ENCODE measurements at regions of chr19 and their contacts with region 1.

Region 1: GRCh38 chr19:47243776-47244547 is 12.4 kb upstream of the CCDC9 start:
- DNase-seq: peak; percentile 91
- H3K4me3 ChIP-seq: peak overlapping the region; percentile 37 to 57
- H3K27ac ChIP-seq: peak overlapping the region; percentile 68 to 84
- H3K4me1 ChIP-seq: peaks cover 12 to 36% of the 10 kb centered on the region in 2 experiments; a peak in 3 of 4 replicates
- H3K27me3 ChIP-seq: no peaks in the 10 kb centered on the region
- CTCF ChIP-seq: peak; percentile 97
- EP300 ChIP-seq: peak in 1 of 2 experiments; percentile 68; a peak in 1 of 4 replicates
- RAD21 ChIP-seq: peak; percentile 94

Region 2: GRCh38 chr19:47112997-47113849 is 130.7 kb before region 1 on chr19 and contains the start of gene ZC3H4:
- CTCF ChIA-PET with region 1: interaction called, 11 read pairs
- POLR2A ChIA-PET with region 1: interaction called, 6 read pairs
- DNase-seq: peak; percentile 92
- H3K4me3 ChIP-seq: peak within 1 kb of the TSS; percentile 78 to 92
- H3K27ac ChIP-seq: peak within 1 kb of the TSS; percentile 99 to 100
- H3K4me1 ChIP-seq: peaks cover 18 to 23% of the 10 kb centered on the region in 2 experiments
- H3K27me3 ChIP-seq: no peaks in the 10 kb centered on the region
- CTCF ChIP-seq: no peak
- EP300 ChIP-seq: peak in 1 of 2 experiments; percentile 28; a peak in 1 of 4 replicates
- RAD21 ChIP-seq: no peak
- polyA plus RNA-seq, gene ZC3H4: 3.9 and 7.6 TPM in 2 replicates

Region 3: DNA sequence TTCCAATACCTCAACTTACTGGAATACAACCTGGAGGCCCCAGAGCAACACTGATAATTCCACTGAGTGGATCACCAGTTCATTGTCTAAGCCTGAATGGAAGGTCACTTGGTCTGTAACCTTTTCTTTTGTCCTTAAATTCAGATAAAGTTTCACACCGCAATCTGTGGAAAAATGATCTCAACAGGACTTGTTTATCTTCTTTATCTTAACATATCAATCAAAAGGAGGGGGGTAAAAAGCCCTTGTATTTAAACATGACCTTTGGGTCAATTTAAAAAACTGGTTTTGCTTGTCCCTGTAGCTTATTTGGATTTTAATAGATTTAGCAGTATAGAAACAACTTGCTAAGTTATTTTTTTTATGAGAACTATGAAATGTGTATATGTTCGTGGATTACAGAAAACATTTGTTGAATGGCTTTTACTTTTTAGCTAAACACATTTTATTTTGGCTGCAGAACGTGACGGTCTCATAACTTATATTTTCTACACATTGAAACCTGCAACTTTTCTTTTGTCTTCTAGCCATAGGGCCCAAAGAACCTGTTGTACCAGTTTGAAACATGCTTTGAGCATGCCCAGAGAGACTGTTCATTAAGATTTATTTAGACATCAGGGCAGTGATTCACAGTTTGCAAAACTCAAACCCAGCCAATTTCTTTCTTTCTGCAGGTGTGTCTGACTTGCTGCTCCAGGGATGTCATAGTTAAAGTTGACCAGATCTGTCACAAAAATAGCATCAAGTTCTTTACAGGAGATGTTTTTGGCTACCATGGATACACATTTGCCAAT is 91.5 kb before region 1 on chr19:
- CTCF ChIA-PET with region 1: interaction called, 132 read pairs
- POLR2A ChIA-PET with region 1: interaction called, 3 read pairs
- DNase-seq: no peak
- H3K4me3 ChIP-seq: no peak overlapping the region
- H3K27ac ChIP-seq: peak overlapping the region in 1 of 2 experiments; percentile 50; a peak in 1 of 4 replicates
- H3K4me1 ChIP-seq: peaks cover 0 to 3% of the 10 kb centered on the region in 2 experiments; a peak in 2 of 4 replicates
- H3K27me3 ChIP-seq: no peaks in the 10 kb centered on the region
- CTCF ChIP-seq: no peak
- EP300 ChIP-seq: no peak
- RAD21 ChIP-seq: no peak

Region 4: DNA sequence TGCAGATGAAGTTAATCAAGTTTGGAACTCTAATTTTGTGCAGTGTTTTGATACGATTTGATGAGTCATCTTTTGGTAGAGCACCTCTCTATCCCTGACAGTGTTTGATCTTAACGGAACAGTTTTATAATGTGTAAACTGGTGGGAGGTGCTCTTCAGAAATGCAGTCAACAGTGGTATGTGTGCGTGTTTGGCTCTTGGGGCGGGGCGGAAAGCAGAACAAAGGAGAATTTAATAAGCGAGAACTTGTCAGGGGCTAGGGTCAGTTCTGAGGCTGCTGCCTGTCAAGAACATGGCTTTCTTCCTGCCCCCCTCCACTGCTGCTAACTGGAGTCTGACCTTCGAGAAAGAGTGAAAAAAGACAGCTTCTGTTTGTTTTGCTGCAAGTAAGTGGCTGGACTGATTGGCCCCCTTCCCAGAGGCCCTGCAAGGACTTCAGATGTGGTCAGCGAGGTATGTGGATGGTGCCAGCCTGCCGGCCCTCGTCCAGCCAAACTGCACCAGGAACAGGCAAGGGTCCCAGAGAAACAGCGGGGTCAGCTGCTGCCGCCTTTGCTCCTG is 53.7 kb before region 1 on chr19:
- CTCF ChIA-PET with region 1: interaction called, 19 read pairs
- POLR2A ChIA-PET with region 1: interaction called, 5 read pairs
- DNase-seq: peak; percentile 46
- H3K4me3 ChIP-seq: peak overlapping the region in 1 of 2 experiments; percentile 16; a peak in 1 of 4 replicates
- H3K27ac ChIP-seq: peak overlapping the region; percentile 60 to 73
- H3K4me1 ChIP-seq: peaks cover 17 to 47% of the 10 kb centered on the region in 2 experiments; a peak in 3 of 4 replicates
- H3K27me3 ChIP-seq: no peaks in the 10 kb centered on the region
- CTCF ChIP-seq: no peak
- EP300 ChIP-seq: peak in 1 of 2 experiments; percentile 63; a peak in 1 of 4 replicates
- RAD21 ChIP-seq: no peak

Region 5: GRCh38 chr19:47231215-47231984 is 12.6 kb before region 1 on chr19:
- CTCF ChIA-PET with region 1: interaction called, 520 read pairs
- POLR2A ChIA-PET with region 1: interaction called, 65 read pairs
- DNase-seq: peak; percentile 94
- H3K4me3 ChIP-seq: peak overlapping the region; percentile 49 to 93
- H3K27ac ChIP-seq: peak overlapping the region; percentile 89 to 90
- H3K4me1 ChIP-seq: peaks cover 20 to 34% of the 10 kb centered on the region in 2 experiments
- H3K27me3 ChIP-seq: no peaks in the 10 kb centered on the region
- CTCF ChIP-seq: no peak
- EP300 ChIP-seq: no peak
- RAD21 ChIP-seq: no peak

Region 6: DNA sequence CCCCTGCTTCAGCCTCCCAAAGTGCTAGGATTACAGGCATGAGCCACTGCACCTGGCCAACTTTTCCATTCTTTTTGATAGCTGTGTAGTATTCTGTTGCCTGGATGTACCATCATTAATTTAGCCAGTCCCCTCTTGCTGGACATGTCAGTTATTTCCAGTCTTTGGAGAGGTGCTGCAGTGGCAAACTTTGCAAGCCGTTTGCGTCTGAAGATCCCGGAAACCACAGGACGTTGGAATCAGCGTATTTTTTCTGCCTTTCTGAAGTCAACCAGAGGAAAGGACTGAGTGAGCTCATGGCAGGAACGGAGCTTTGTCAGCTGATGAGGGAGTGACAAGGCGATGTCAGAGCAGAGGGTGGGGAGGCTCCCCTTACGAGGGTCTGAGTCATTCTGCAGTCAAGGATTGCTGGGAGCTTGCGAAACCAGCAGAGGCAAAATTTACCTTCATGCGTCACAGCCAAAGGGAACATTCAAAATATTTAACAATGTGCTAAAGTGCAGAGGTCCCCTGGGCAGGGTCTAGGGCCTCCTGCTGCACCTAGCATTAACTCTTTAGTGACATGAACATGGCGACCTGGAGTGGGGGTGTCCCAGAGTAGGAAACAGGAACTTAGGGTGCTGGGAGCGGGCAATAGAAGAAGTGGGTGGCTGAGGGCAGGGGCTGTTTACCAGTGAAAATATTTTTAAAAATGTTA is 71.3 kb after region 1 on chr19:
- CTCF ChIA-PET with region 1: no interaction called
- POLR2A ChIA-PET with region 1: no interaction called
- DNase-seq: no peak
- H3K4me3 ChIP-seq: no peak overlapping the region
- H3K27ac ChIP-seq: no peak overlapping the region
- H3K4me1 ChIP-seq: peaks cover 0 to 4% of the 10 kb centered on the region in 2 experiments; a peak in 2 of 4 replicates
- H3K27me3 ChIP-seq: peaks cover 12% of the 10 kb centered on the region
- CTCF ChIP-seq: no peak
- EP300 ChIP-seq: no peak
- RAD21 ChIP-seq: no peak

Measured in SK-N-SH (cell line).